ENCODE measurements at regions of chr2 and their contacts with region 1.

Region 1: GRCh38 chr2:38535744-38536506 is 66.8 kb downstream of the HNRNPLL start:
- DNase-seq: peak; percentile 72
- H3K4me3 Mint-ChIP-seq: peak overlapping the region; percentile 67
- H3K27ac Mint-ChIP-seq: no peak overlapping the region
- H3K4me1 Mint-ChIP-seq: no peaks in the 10 kb centered on the region
- H3K27me3 Mint-ChIP-seq: peaks cover 14% of the 10 kb centered on the region

Region 2: DNA sequence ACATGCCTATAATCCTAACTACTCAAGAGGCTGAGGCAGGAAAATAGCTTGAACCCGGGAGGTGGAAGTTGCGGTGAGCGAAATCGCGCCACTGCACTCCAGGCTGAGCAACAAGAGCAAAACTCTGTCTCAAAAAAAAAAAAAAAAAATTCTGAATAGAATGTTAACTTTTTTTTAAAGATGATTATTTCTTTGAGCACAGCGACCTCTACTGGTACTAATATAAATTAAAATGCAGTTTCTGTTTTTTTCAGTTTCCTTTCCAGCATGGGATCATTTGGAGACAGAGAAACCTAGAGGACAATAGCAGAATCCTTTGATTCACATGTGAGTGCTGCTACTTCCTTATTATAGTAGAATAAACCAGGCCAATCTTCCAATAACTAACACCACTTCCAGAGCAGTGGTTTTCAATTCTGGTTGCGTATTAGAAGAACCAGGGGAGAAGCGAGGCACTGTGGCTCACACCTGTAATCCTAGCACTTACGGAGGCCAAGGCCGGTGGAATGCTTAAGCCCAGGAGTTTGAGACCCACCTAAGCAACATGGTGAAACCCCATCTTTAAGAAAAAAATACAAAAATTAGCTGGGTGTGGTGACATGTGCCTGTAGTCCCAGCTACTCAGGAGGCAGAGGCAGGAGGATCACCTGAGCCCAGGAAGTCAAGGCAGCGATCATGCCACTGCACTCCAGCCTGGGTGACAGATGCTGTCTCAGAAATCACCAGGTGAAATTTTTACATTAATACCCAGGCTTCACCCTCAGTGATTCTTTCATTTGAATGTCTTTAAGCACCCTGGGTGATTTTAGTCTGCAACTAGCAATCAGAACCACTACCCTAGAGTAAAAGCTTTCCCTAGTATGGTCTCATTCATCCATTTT is 205.2 kb after region 1 on chr2:
- intact Hi-C with region 1: loop called (anchors 1 kb)
- DNase-seq: no peak
- H3K4me3 Mint-ChIP-seq: no peak overlapping the region
- H3K27ac Mint-ChIP-seq: no peak overlapping the region
- H3K4me1 Mint-ChIP-seq: peaks cover 34% of the 10 kb centered on the region
- H3K27me3 Mint-ChIP-seq: no peaks in the 10 kb centered on the region

Region 3: GRCh38 chr2:38835015-38835601 is 299.2 kb after region 1 on chr2:
- intact Hi-C with region 1: loop called (anchors 2 kb)
- DNase-seq: no peak
- H3K4me3 Mint-ChIP-seq: no peak overlapping the region
- H3K27ac Mint-ChIP-seq: no peak overlapping the region
- H3K4me1 Mint-ChIP-seq: no peaks in the 10 kb centered on the region
- H3K27me3 Mint-ChIP-seq: no peaks in the 10 kb centered on the region

Measured in activated T-helper 1 cell treated with anti-CD3 and anti-CD28 coated beads, Interleukin-12 subunit alpha, Interleukin-12 subunit beta, Interleukin-2, Interleukin-4 antibody, amounts not matched to agents 30 ng/mL and 10 ng/mL and 1 ng/mL, durations not matched to agents 14 hours and 24 hours and 36 hours (primary cell).